ENCODE measurements at regions of chr2 and their contacts with region 1.

Region 1: GRCh38 chr2:44233450-44234128 is 41.7 kb upstream of the SLC3A1 start:
- DNase-seq: no peak
- CTCF ChIP-seq: no peak

Region 2: DNA sequence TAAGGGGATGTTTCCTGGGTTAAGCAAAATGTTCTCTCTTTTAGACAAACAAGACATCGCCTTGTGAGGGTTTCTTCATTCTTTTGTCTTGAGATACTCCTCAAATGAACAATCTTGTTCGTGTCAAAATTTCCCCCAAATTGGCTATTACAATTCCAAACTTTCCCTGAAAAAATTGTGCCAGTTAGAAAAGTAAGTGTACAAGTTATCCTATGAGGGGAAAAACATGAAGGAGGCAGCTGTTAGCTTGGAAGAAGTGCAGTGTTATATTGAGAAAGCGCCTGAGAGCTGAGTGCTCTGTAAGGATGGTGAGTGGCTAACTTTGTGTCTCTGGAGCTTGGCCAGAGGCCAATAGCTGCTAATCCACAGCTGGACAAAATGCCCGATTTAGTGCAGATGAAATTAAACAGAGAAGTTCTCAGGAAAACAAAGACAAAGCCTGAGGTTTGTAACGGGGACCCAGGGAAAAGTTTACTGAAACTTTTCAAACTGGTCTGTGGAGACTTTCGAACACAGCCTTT is 610.6 kb before region 1 on chr2:
- CTCF ChIA-PET with region 1: no interaction called
- POLR2A ChIA-PET with region 1: no interaction called
- DNase-seq: no peak
- CTCF ChIP-seq: no peak

Region 3: DNA sequence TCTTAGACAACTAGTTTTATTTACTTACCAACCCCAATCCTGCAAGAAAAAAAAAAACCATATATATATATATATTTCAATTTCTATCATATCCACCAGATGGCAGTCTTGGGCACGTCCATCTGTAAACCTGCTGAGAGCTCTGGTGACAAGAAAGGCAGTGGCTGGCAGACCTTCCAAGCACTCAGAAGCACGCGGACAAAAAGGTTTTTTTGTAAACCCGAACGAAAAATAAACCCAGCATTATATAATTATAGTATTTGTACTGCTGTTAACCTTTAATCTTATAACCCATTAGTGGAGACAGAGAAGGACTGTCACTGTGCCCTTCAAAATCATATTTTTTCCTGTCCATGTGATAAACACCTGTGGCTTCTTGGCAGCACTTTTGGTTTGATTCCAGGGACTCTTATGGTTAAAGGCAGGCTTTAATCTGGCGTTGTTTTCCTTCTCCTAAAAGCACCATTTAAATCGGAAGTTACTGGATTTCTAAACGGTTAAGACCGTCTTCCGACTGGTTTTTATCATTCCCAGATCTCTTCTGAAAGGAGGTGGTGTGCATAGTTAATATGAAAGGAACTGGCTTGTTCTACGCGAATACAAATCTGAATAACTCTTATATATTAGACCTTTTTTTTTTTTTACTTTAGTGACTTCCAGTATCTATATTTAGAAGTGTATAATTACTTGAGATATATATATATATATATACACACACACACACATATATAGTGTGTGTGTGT is 10.7 kb after region 1 on chr2:
- CTCF ChIA-PET with region 1: interaction called, 22 read pairs
- POLR2A ChIA-PET with region 1: no interaction called
- DNase-seq: peak; percentile 55
- CTCF ChIP-seq: peak; percentile 29

Region 4: DNA sequence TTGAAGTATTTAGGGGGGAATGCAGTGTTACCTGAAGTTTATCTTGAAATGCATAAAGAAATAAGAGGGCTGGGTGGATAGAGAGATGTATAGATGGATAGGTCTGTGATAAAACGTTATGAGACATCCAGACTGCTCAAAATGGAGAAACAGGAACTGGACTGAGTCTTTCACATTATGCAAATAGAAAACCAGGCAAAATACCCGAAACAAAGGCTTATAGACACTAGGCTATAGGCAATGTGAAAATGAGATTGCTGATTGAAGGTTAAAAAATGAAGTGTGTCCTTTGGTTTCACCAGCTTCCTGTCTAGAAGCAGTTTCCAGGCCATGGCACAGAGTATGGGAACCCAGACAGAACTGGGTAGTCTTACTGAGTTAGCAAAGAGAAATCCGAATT is 16.8 kb after region 1 on chr2:
- CTCF ChIA-PET with region 1: interaction called, 22 read pairs
- POLR2A ChIA-PET with region 1: no interaction called
- DNase-seq: peak; percentile 23
- CTCF ChIP-seq: no peak